ENCODE measurements at regions of chr22 and their contacts with region 1.

Region 1: GRCh38 chr22:22959147-22959827 is 71.7 kb downstream of the IGLL5 start:
- DNase-seq: no peak
- ATAC-seq: peak; percentile 69; the same call in 1 of the 2 replicates
- H3K4me3 ChIP-seq: no peak overlapping the region
- H3K27ac ChIP-seq: no peak overlapping the region
- H3K4me1 ChIP-seq: no peaks in the 10 kb centered on the region
- H3K27me3 ChIP-seq: peaks cover 2% of the 10 kb centered on the region
- CTCF ChIP-seq: peak; percentile 84

Region 2: GRCh38 chr22:21857481-21857914 is 1101.8 kb before region 1 on chr22:
- CTCF ChIA-PET with region 1: no interaction called
- POLR2A ChIA-PET with region 1: no interaction called
- in situ Hi-C with region 1: no loop called
- intact Hi-C with region 1: no loop called
- DNase-seq: no peak
- ATAC-seq: no peak
- H3K4me3 ChIP-seq: no peak overlapping the region
- H3K27ac ChIP-seq: no peak overlapping the region
- H3K4me1 ChIP-seq: peaks cover 14% of the 10 kb centered on the region
- H3K27me3 ChIP-seq: no peaks in the 10 kb centered on the region
- CTCF ChIP-seq: no peak

Region 3: DNA sequence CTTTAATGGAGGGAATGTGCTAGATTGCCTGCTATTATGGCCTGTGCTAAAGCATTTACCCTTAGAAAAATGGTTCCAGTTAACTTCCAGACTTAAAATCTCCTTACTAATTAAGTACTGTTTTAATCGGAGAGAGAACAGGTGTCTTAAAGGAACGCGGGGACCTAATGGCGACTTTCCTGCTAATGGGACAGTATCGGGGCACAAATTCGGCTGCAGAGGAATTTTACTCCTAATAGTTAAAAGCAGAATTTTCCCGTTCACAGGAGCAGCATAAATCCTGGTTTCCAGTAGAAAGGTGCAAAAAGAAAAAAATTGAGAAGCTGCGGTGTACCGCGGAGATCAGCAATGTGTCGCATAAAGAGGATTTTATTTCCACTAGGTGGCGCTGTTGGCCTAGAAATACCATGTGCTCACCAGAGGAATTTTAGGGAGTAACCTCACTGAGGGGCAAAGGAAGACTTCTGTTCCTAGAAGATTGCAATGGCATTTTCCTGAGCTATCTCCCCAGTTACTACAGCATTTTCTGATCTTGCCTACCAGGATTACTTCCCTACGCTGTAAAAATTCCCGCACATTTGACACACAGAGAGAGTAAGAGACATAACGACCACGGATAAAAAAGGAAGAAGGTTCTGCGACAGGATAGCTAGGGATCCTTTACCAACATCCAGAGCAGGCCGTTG is 495.3 kb before region 1 on chr22:
- CTCF ChIA-PET with region 1: no interaction called
- POLR2A ChIA-PET with region 1: no interaction called
- in situ Hi-C with region 1: no loop called
- intact Hi-C with region 1: loop called (anchors 10 kb)
- DNase-seq: peak; percentile 15
- ATAC-seq: 0 out of 2 replicates have a peak, but pooled peaks have one; percentile 72
- H3K4me3 ChIP-seq: no peak overlapping the region
- H3K27ac ChIP-seq: no peak overlapping the region
- H3K4me1 ChIP-seq: no peaks in the 10 kb centered on the region
- H3K27me3 ChIP-seq: no peaks in the 10 kb centered on the region; the same call in 1 of the 2 replicates
- CTCF ChIP-seq: peak; percentile 67

Region 4: GRCh38 chr22:22662095-22662494 is 297.2 kb before region 1 on chr22:
- CTCF ChIA-PET with region 1: interaction called, 12 read pairs
- POLR2A ChIA-PET with region 1: no interaction called
- in situ Hi-C with region 1: no loop called
- intact Hi-C with region 1: no loop called
- DNase-seq: no peak
- ATAC-seq: no peak
- H3K4me3 ChIP-seq: no peak overlapping the region
- H3K27ac ChIP-seq: no peak overlapping the region
- H3K4me1 ChIP-seq: no peaks in the 10 kb centered on the region
- H3K27me3 ChIP-seq: no peaks in the 10 kb centered on the region; the same call in none of the 2 replicates
- CTCF ChIP-seq: no peak

Region 5: GRCh38 chr22:22848364-22848866 is 110.9 kb before region 1 on chr22:
- CTCF ChIA-PET with region 1: no interaction called
- POLR2A ChIA-PET with region 1: no interaction called
- in situ Hi-C with region 1: no loop called
- intact Hi-C with region 1: loop called (anchors 5 kb)
- DNase-seq: peak; percentile 22
- ATAC-seq: peak; percentile 95
- H3K4me3 ChIP-seq: no peak overlapping the region
- H3K27ac ChIP-seq: no peak overlapping the region
- H3K4me1 ChIP-seq: no peaks in the 10 kb centered on the region
- H3K27me3 ChIP-seq: no peaks in the 10 kb centered on the region; the same call in none of the 2 replicates
- CTCF ChIP-seq: peak; percentile 91

Region 6: DNA sequence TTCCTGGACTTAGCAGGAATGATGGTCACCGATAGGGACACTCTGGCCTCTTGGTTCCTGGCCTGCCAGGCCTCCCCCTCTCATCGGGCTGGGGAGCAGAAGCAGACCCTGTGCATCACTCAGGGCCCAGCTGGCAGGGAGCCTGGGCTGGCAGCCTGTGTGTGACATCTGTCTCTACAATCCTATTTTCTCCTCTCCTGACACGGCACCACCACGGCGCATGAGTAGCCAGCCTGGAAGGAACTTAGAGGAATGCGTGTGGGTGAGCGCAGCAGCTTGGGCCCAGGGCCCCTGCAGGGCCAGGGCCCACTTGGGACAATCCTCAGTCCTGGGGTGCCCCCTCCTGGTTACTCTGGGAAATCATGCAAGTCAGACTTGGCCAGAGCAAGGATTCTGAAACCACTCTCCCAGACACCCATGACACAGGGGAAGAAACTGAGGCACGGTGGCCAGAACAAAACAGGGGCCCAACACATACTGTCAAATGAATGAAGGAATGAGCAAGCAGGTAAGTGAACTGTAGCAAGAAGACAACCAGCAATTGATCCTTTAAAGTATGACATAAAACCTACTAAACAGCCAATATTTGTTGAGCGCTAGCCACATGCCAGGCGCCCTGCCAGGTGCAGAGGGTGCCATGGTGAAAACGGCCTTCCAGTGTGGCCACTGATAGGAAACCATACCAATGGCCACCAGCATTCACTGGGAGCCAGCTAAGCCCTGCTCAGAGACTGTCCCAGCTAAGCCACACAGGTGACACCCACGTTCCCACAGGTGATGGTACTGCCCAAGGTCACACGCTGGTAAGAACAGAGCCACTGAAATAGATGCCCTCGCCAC is 169.2 kb after region 1 on chr22:
- CTCF ChIA-PET with region 1: interaction called, 14 read pairs
- POLR2A ChIA-PET with region 1: no interaction called
- in situ Hi-C with region 1: no loop called
- intact Hi-C with region 1: loop called (anchors 1 kb)
- DNase-seq: no peak
- ATAC-seq: peak; percentile 87
- H3K4me3 ChIP-seq: no peak overlapping the region
- H3K27ac ChIP-seq: no peak overlapping the region
- H3K4me1 ChIP-seq: no peaks in the 10 kb centered on the region
- H3K27me3 ChIP-seq: no peaks in the 10 kb centered on the region
- CTCF ChIP-seq: peak; percentile 77

Measured in Panc1 (cell line).